Testis (tissue), 5 donors: ENCODE measurements at regions of chr6 and their contacts with region 1.

Region 1: GRCh38 chr6:151681433-151682059 is 125.9 kb upstream of the ESR1 start:
- DNase-seq: peak; percentile 17
- H3K4me3 ChIP-seq: peak overlapping the region in 1 of 2 donors; percentile 30
- H3K27ac ChIP-seq: no peak overlapping the region
- H3K4me1 ChIP-seq: no peaks in the 10 kb centered on the region
- H3K27me3 ChIP-seq: no peaks in the 10 kb centered on the region
- CTCF ChIP-seq: no peak
- POLR2A ChIP-seq: no peak

Region 2: DNA sequence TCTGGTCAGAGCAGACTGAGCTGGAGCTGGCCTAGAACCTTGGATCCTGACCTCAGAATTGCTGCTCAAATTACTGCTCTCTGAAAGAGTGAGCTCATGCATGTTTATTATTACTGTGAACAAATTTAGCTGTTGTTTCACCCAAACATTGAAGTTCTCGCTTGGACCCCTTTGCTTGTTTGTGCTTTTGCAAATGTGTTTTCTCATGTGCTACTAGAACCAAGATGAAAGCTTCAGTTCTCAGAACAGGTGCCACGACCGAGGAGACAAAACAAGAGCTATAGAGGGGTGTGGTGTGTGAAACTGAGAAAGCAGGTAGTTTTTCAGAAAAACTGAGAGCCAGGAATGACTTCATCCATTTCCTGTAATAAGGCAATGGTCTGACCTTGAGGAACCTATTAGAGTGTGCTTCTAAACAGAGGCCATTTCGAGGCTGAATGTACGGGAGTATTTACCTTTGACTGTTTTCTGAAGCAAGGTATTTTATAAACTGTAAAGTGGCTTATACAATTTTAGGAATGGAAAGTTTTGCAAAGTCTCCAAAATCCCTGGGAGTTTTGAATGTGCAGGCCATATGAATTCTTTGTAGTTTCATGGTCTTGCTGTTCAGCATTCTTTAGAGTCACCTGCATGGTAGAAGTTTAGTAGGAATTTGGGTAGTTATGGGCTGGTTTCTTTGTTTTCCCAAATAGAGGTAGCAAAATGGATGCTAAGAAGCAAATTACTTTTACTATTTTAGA is 76.1 kb after region 1 on chr6:
- intact Hi-C with region 1: no loop called
- DNase-seq: no peak
- H3K4me3 ChIP-seq: no peak overlapping the region
- H3K27ac ChIP-seq: no peak overlapping the region
- H3K4me1 ChIP-seq: no peaks in the 10 kb centered on the region
- H3K27me3 ChIP-seq: no peaks in the 10 kb centered on the region
- CTCF ChIP-seq: no peak
- POLR2A ChIP-seq: no peak

Region 3: DNA sequence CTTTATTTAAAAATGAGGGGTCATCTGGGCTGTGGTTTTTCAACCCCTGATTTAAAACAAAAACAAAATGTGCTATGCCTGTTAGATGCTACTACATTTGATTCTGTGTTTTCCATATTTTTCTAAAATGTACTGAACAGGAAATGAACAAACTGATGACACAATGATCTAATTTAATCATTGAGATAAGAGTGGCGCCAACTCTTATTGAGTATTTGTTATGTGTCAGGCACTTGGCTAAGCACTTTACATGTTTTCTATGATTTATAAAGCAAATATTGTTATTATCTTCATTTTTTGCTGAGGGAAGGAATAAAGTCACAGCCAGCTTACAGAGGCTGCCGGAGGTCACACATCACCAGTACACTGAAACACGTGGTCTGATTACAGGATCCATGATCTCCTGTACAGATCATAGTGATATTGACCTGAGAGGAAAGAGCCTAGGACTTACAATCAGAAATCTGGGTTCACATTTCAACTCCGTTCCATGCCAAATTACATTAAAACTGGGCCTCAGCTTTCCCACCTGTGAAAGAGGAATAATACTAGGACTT is 292.6 kb after region 1 on chr6:
- intact Hi-C with region 1: no loop called
- DNase-seq: no peak
- H3K4me3 ChIP-seq: no peak overlapping the region
- H3K27ac ChIP-seq: no peak overlapping the region
- H3K4me1 ChIP-seq: no peaks in the 10 kb centered on the region
- H3K27me3 ChIP-seq: no peaks in the 10 kb centered on the region
- CTCF ChIP-seq: no peak
- POLR2A ChIP-seq: no peak

Region 4: DNA sequence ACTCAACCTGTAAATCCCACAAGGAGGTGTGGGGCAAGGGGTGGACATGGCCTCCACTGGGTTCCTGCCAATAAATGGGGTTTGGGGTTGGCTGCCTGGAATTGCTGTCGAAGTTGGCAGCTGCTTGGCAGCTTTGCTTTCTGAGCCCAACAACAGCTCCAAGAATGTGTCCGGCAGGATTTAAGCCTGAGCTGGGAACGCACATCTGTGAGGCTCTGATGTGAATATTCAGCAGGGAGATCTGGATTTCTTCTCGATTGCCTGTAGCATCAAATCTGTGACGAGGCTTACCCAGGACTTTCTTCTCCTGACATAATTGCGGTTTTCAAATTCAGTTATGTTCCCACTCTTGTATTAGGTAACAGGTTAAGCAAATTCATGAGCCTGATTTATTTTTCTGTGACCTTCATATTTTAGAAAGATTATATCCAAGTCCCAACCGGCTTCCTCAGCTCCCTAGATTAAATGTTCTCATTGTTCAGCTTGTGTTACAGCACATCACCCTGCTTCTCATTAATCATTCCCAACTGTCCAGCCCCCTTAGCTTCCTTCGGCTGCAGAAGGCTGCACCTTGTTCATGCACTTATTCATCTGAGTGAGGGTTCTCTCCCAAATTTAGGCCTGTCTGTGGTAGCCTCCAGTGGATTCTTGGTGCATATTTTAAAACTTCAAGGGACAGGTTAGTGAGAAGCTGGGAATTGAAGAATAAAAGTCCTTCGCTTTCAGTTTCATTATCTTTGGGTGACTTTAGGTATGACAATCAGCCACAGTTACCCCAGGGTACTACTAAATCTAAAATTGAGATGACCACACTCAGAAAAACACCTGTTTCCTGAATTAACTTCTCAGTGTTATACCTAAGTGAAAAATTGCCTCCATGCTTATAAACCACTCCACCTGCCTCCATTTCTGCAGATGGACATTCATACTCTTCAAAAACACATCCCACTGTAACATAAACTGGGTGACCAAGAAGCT is 435.9 kb after region 1 on chr6:
- intact Hi-C with region 1: loop called (anchors 10 kb)
- DNase-seq: no peak
- H3K4me3 ChIP-seq: no peak overlapping the region
- H3K27ac ChIP-seq: no peak overlapping the region
- H3K4me1 ChIP-seq: peaks cover 5% of the 10 kb centered on the region
- H3K27me3 ChIP-seq: no peaks in the 10 kb centered on the region
- CTCF ChIP-seq: no peak
- POLR2A ChIP-seq: no peak